ENCODE measurements at regions of chr7 and their contacts with region 1.

Region 1: GRCh38 chr7:55086413-55087201 is 67.8 kb downstream of the EGFR start:
- DNase-seq: peak; percentile 65 to 87
- H3K4me3 ChIP-seq: no peak overlapping the region
- H3K27ac ChIP-seq: peak overlapping the region; percentile 25
- H3K4me1 ChIP-seq: peaks cover 19% of the 10 kb centered on the region
- H3K27me3 ChIP-seq: no peaks in the 10 kb centered on the region
- CTCF ChIP-seq: no peak

Region 2: GRCh38 chr7:55110661-55111361 is 24.2 kb after region 1 on chr7:
- CTCF ChIA-PET with region 1: no interaction called
- POLR2A ChIA-PET with region 1: no interaction called
- intact Hi-C with region 1: loop called (anchors 2 kb)
- DNase-seq: peak; percentile 68 to 71
- H3K4me3 ChIP-seq: no peak overlapping the region
- H3K27ac ChIP-seq: peak overlapping the region; percentile 2; the same call in 1 of the 2 replicates
- H3K4me1 ChIP-seq: peaks cover 50% of the 10 kb centered on the region
- H3K27me3 ChIP-seq: no peaks in the 10 kb centered on the region
- CTCF ChIP-seq: no peak